CD4-positive, alpha-beta memory T cell (primary cell): ENCODE measurements at regions of chr11 and their contacts with region 1.

Region 1: GRCh38 chr11:798093-798713 is at the start of gene SLC25A22:
- DNase-seq: peak; percentile 80 to 90 (median 85)
- H3K4me3 ChIP-seq: peak within 1 kb of the TSS; percentile 73 to 91
- H3K4me3 Mint-ChIP-seq: peak within 1 kb of the TSS; percentile 86 to 97 (median 91)
- H3K27ac ChIP-seq: peak within 1 kb of the TSS; percentile 86
- H3K27ac Mint-ChIP-seq: peak within 1 kb of the TSS; percentile 93 to 96 (median 94)
- H3K4me1 ChIP-seq: peaks cover 32% of the 10 kb centered on the region
- H3K4me1 Mint-ChIP-seq: peaks cover 5 to 19% (median 10%) of the 10 kb centered on the region in 4 donors
- H3K27me3 ChIP-seq: no peaks in the 10 kb centered on the region
- H3K27me3 Mint-ChIP-seq: no peaks in the 10 kb centered on the region
- total RNA-seq, gene SLC25A22: 24.0 to 24.1 TPM

Region 2: DNA sequence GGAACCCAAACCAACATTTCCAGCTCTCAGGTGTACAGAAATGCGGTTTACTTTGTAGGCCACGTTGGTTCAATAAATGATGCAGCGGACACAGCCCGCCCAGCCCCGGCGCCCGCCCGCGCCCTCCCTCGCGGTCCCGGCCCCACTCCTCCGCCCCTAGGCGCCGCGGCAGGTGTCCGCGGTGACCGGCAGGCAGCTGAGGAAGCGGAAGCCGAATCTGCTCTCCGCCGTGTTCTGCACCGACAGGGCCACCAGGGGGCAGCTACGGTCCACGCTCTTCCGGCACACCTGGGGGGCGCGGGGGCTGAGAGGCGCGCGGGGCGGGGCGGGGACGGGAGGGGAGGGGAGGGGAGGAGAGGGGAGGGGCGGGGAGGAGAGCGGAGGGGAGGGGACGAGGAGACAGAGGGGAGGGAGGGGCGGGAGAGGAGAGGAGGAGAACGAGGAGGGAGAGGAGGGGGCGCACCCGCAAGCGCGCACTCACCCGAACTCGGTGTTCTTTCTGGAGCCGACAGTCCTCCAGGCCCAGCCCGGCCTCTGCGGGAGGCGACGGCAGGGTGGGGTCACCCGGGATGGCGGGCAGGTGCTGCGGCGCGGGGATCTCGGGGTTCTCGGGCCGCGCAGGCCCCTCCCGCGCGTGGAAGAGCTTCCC is 243.3 kb before region 1 on chr11:
- CTCF ChIA-PET with region 1: no interaction called
- POLR2A ChIA-PET with region 1: no interaction called
- intact Hi-C with region 1: loop called (anchors 5 kb)
- DNase-seq: peak; percentile 72 to 77 (median 74)
- H3K4me3 ChIP-seq: peak overlapping the region in 1 of 2 donors; percentile 43
- H3K4me3 Mint-ChIP-seq: peak overlapping the region in 6 of 8 donors; percentile 13 to 68 (median 58)
- H3K27ac ChIP-seq: peak overlapping the region; percentile 21
- H3K27ac Mint-ChIP-seq: peak overlapping the region in 1 of 7 donors; percentile 46
- H3K4me1 ChIP-seq: peaks cover 16% of the 10 kb centered on the region
- H3K4me1 Mint-ChIP-seq: peaks cover 3 to 12% (median 4%) of the 10 kb centered on the region in 4 donors
- H3K27me3 ChIP-seq: no peaks in the 10 kb centered on the region
- H3K27me3 Mint-ChIP-seq: no peaks in the 10 kb centered on the region

Region 3: DNA sequence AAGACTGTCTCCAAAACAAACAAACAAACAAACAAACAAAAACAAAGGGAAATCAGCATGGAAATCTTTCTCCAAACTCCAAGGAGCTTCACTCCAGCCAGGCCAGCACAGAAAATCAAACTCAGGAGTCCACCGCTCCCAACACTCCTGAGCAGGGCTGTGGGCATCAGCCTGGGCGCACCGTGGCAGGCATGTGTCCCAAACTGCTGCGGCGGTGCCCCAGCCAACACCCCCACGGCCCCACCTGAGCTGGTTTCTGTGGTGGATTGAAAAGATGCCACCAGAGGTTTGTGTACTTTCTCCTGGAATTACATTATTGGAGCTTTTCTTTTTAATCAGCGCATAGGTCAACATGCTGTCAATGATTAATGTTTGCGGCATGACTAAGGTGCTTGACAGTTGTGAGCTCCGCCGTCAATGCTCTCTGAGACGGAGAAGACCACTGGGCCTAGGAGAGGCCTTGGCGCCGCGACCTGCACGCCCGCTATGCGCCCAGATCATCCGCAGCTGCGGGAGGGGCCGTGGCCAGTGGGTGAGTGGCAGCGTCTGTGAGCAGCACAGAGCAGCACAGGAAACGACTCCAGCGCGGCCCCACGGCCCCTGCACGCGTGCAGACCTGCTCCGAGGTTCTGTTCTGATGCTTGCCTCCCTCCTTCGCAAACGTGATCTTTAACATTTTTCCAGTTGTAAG is 143.0 kb before region 1 on chr11:
- CTCF ChIA-PET with region 1: no interaction called
- POLR2A ChIA-PET with region 1: no interaction called
- intact Hi-C with region 1: no loop called
- DNase-seq: no peak
- H3K4me3 ChIP-seq: no peak overlapping the region
- H3K4me3 Mint-ChIP-seq: no peak overlapping the region
- H3K27ac ChIP-seq: no peak overlapping the region
- H3K27ac Mint-ChIP-seq: no peak overlapping the region
- H3K4me1 ChIP-seq: no peaks in the 10 kb centered on the region
- H3K4me1 Mint-ChIP-seq: peaks cover 0 to 3% (median 0%) of the 10 kb centered on the region in 4 donors
- H3K27me3 ChIP-seq: no peaks in the 10 kb centered on the region
- H3K27me3 Mint-ChIP-seq: no peaks in the 10 kb centered on the region

Region 4: DNA sequence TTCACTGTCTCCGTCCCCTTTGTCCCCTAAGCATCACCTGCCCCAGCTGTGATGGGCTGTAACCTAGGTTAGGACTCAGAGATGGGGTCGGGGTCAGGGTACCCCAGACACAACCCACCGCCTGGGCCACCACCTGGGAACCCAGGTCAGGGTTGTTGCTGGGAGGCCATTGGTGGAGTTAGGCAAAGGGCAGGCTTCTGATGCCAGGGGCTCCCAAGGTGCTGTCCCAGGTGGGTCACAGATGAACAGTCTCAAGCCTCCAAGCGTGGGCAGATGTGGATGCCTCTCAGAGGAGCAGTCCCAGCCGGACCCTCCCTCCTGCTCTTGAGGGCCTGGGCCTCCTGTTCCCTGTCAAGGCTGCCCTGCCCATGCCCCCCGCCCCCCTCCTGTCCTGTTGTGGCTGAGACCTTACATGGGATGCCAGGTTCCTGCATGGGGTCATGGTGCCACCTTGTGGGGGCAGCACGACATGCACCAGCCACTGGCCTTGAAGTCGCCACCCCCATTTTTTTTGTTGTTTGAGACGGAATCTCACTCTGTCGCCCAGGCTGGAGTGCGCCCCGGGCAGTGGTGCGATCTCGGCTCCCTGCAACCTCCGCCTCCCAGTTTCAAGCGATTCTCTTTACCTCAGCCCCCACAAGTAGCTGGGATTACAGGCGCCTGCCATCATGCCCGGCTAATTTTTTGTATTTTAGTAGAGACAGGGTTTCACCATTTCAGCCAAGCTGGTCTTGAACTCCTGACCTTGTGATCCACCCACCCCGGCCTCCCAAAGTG is 33.0 kb before region 1 on chr11:
- CTCF ChIA-PET with region 1: interaction called, 3 read pairs
- POLR2A ChIA-PET with region 1: interaction called, 6 read pairs
- intact Hi-C with region 1: loop called (anchors 5 kb)
- DNase-seq: peak; percentile 61 to 67 (median 63)
- H3K4me3 ChIP-seq: no peak overlapping the region
- H3K4me3 Mint-ChIP-seq: no peak overlapping the region
- H3K27ac ChIP-seq: no peak overlapping the region
- H3K27ac Mint-ChIP-seq: peak overlapping the region in 5 of 7 donors; percentile 55 to 81 (median 75)
- H3K4me1 ChIP-seq: no peaks in the 10 kb centered on the region
- H3K4me1 Mint-ChIP-seq: no peaks in the 10 kb centered on the region
- H3K27me3 ChIP-seq: no peaks in the 10 kb centered on the region
- H3K27me3 Mint-ChIP-seq: no peaks in the 10 kb centered on the region

Region 5: DNA sequence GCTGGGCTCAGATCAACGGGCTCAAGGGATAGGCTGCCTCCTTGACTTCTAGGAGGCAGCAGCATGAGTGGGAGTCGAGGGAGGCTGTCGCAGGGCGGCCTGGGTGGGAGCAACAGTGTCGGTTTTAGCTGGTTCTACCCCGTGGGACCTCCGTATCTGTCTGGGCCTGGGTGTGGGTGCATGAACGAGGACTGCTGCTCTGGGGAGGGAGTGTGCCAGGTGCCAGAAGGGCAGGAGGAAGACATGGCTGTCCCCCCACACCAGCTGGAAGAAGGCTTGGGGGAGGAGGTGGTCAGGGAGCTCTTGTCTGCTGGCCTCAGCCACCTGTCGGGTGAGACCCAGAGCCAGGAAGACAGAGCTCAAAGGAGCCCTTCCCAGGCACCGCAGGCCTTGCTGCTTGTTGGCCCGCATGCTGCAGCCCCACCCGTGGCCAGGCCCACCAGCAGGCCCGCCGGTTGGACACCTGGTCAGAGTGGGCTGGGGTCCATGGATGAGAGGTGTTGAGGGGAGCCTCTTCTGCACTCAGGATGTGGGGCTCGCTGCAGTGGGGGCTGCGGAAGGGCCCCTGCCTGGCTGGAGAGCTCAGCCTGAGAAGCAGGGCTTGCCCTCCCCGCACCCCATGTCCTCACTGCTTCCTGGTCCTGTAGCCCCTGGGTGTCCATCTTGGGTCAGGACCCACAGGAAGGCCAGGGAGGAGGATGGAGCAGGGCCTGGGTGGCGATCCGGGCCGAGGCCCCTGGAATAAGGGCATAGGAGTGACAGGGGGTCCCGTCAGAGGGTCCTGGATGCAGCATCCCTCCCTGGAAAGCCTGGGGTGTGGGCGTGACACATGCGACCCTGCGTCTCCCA is 11.7 kb before region 1 on chr11:
- CTCF ChIA-PET with region 1: interaction called, 9 read pairs
- POLR2A ChIA-PET with region 1: interaction called, 13 read pairs
- intact Hi-C with region 1: no loop called
- DNase-seq: no peak
- H3K4me3 ChIP-seq: no peak overlapping the region
- H3K4me3 Mint-ChIP-seq: peak overlapping the region in 1 of 8 donors; percentile 30
- H3K27ac ChIP-seq: no peak overlapping the region
- H3K27ac Mint-ChIP-seq: no peak overlapping the region
- H3K4me1 ChIP-seq: peaks cover 5% of the 10 kb centered on the region
- H3K4me1 Mint-ChIP-seq: peaks cover 0 to 6% (median 2%) of the 10 kb centered on the region in 4 donors
- H3K27me3 ChIP-seq: peaks cover 4% of the 10 kb centered on the region
- H3K27me3 Mint-ChIP-seq: no peaks in the 10 kb centered on the region

Region 6: GRCh38 chr11:819129-819931 is 21.1 kb after region 1 on chr11:
- CTCF ChIA-PET with region 1: interaction called, 4 read pairs
- POLR2A ChIA-PET with region 1: interaction called, 48 read pairs
- intact Hi-C with region 1: no loop called
- DNase-seq: peak; percentile 89 to 92 (median 91)
- H3K4me3 ChIP-seq: peak overlapping the region in 1 of 2 donors; percentile 73
- H3K4me3 Mint-ChIP-seq: peak overlapping the region; percentile 11 to 94 (median 89)
- H3K27ac ChIP-seq: peak overlapping the region; percentile 81
- H3K27ac Mint-ChIP-seq: peak overlapping the region in 6 of 7 donors; percentile 88 to 94 (median 92)
- H3K4me1 ChIP-seq: peaks cover 22% of the 10 kb centered on the region
- H3K4me1 Mint-ChIP-seq: peaks cover 2 to 22% (median 11%) of the 10 kb centered on the region in 4 donors
- H3K27me3 ChIP-seq: no peaks in the 10 kb centered on the region
- H3K27me3 Mint-ChIP-seq: no peaks in the 10 kb centered on the region